ENCODE measurements at regions of chr18 and their contacts with region 1.

Region 1: GRCh38 chr18:79405781-79406575 is 10.2 kb downstream of the NFATC1 start:
- DNase-seq: peak; percentile 96
- H3K4me3 Mint-ChIP-seq: peak overlapping the region; percentile 81
- H3K27ac Mint-ChIP-seq: peak overlapping the region; percentile 94
- H3K4me1 Mint-ChIP-seq: peaks cover 63% of the 10 kb centered on the region
- H3K27me3 Mint-ChIP-seq: no peaks in the 10 kb centered on the region

Region 2: DNA sequence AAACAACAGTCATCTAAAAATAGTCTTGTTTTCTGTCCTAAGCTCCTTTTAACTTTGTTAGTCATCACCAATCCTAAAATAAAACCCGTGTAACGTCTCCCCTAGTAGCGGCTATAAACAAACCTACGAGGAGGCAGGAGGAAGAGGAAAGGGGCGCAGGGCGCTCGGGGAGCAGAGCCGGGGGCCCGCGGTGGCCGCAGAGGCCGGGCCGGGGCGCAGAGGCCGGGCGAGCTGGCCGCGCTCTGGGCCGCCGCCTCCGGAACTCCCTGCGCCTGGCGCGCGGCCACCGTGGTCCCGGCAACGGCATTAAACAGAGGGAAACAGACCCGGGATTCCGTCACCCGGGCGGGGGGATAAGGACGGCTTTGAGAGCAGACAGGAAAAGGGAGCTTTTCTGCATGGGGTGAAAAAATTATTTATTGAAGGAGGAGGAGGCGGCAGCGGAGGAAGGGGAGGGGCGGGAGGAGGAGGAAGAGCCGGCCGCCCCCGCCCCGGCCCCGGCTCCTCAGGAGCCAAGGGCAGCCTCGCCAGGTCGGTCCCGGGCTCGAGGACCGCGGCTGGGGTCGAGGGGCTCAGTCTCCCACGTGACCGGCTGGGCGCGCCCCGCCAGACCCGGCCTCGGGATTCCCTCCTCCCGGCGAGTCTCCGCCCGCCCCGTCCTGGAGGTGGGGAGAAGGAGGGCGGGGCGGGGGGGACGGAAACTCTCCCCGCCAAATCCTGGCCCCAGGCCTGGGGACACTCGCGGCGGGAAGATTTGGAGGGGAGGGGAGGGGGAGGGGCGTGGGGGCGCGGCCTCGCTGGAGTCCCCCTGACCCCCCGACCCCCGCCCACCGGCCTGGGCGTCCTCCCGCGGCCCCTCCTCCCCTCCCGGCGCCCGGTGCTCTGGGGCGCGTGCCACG is 12.1 kb before region 1 on chr18:
- CTCF ChIA-PET with region 1: interaction called, 13 read pairs
- intact Hi-C with region 1: loop called (anchors 1 kb)
- DNase-seq: peak; percentile 73
- H3K4me3 Mint-ChIP-seq: peak overlapping the region; percentile 74
- H3K27ac Mint-ChIP-seq: peak overlapping the region; percentile 71
- H3K4me1 Mint-ChIP-seq: peaks cover 34% of the 10 kb centered on the region
- H3K27me3 Mint-ChIP-seq: peaks cover 5% of the 10 kb centered on the region

Region 3: GRCh38 chr18:80034068-80034851 is 628.3 kb after region 1 on chr18 and contains the start of gene RBFA:
- CTCF ChIA-PET with region 1: no interaction called
- intact Hi-C with region 1: loop called (anchors 2 kb)
- DNase-seq: peak; percentile 100
- H3K4me3 Mint-ChIP-seq: peak within 1 kb of the TSS; percentile 82
- H3K27ac Mint-ChIP-seq: peak within 1 kb of the TSS; percentile 73
- H3K4me1 Mint-ChIP-seq: peaks cover 26% of the 10 kb centered on the region
- H3K27me3 Mint-ChIP-seq: no peaks in the 10 kb centered on the region
- total RNA-seq, gene RBFA: 35.7 to 36.0 TPM